Spleen (tissue), 13 donors: ENCODE measurements at regions of chr3 and their contacts with region 1.

Region 1: DNA sequence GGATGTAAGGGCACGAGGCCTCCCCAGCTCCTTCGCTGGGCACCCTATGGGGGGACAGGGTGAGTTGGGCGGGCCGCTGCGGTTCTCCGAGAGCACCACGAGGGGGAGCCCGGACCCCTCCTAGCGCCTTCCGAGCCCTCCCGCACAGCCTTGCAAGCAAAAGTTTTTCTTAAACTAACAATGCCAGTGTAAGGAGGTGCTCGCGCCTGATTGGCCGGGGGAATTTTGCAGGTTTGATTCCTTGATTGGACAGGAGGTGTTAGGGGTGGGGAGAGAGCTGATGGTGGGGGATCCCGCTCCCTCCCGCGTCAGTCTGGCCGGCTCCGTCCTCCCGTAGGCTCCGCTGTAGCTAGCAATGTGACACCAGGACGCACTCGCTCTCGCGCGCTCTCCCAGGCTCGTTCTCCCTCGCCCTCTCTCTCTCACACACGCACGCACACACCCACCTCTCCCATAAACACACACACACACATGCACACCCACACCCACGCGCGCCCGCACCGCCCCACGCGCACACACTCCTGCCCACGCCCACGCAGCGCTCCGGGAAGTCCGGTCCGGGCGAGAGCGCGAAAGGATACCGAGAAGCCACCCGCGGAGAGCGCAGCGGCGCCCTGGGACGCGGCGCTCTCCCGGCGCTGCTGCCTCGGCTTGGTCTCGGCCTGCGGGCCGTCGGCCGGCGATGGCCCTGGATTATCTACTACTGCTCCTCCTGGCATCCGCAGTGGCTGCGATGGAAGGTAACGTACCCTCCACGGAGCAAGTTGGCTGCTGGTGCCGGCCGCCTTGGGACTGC is at the start of gene EPHB1:
- DNase-seq: peak; percentile 92
- H3K4me3 ChIP-seq: peak within 1 kb of the TSS; percentile 40 to 71 (median 50)
- H3K27ac ChIP-seq: peak within 1 kb of the TSS in 5 of 8 donors; percentile 38 to 55 (median 43)
- H3K4me1 ChIP-seq: peaks cover 8 to 39% (median 28%) of the 10 kb centered on the region in 6 donors
- H3K27me3 ChIP-seq: peaks cover 0 to 69% (median 27%) of the 10 kb centered on the region in 7 donors
- CTCF ChIP-seq: peak; percentile 55 to 94 (median 87)
- POLR2A ChIP-seq: peak in 1 of 3 donors; percentile 5
- total RNA-seq, gene EPHB1: 2.5 to 14.0 (median 7.4) TPM

Region 2: DNA sequence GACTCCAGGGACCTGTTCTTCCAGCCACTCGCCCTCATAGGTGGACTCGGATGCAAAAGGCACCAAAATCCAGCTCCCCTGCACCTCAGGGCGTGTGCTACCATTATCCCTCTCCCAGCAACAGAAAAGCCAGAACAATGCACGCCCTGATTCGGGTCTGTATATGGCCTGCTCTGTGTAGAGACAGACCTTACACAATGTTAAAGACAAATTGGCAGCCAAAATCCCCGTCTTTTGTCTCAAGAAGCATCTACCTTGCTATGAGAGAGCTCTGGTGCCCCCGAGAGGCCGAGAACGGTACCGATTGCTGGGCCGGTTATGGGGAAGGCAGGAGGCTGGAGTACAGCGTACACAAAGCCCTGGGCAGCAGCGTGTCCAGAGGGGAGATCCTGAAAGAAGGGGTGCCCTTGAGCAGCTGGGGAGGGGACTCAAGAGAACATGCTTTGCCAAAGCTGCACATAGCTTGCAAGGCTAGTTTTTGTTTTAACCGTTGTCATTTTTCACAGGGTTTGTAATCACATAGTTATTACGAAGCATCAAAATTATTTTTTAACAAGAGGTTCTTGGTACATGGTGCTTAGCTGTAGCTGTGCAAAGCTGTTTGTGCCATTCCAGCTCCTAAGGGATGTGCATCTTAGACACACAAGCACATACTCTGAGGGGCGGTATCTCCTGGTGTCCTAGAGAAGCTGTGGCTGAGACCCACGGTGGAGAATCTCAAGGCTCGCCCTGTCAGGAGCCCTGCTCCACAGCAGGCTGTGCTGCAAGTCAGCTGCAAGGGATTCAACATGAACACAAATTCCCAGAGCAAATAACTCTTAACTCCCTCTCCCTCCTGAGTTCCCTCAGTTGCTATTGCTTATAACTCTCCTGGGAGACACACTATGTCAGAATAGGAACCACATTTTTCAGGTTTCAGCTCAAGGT is 708.9 kb after region 1 on chr3:
- intact Hi-C with region 1: loop called (anchors 5 kb)
- DNase-seq: peak; percentile 85
- H3K4me3 ChIP-seq: peak overlapping the region in 2 of 8 donors; percentile 15 to 26
- H3K27ac ChIP-seq: no peak overlapping the region
- H3K4me1 ChIP-seq: peaks cover 0 to 9% (median 4%) of the 10 kb centered on the region in 6 donors
- H3K27me3 ChIP-seq: peaks cover 0 to 13% (median 0%) of the 10 kb centered on the region in 7 donors
- CTCF ChIP-seq: peak in 10 of 11 experiments; percentile 22 to 72 (median 60)
- POLR2A ChIP-seq: no peak

Region 3: DNA sequence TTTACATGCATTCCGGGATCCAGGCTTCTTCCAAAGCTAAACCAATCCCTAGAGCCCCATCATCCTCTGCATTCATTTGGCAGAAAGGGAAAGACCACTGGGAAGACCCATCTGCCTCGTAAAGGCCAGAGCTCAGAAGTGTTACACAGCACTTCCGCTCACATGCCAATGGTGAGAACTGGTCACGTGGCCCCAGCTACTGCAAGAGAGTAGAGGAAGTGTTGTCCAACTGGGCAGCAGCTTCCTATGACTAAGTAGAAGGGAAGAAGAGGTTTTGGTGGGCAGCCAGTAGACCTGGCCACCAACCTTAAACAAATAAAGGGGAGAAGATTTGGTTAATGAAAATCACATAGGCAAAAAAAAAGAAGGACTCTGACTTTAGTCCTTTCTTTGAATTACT is 1096.0 kb after region 1 on chr3:
- intact Hi-C with region 1: loop called (anchors 5 kb)
- DNase-seq: no peak
- H3K4me3 ChIP-seq: no peak overlapping the region
- H3K27ac ChIP-seq: no peak overlapping the region
- H3K4me1 ChIP-seq: no peaks in the 10 kb centered on the region
- H3K27me3 ChIP-seq: no peaks in the 10 kb centered on the region
- CTCF ChIP-seq: no peak
- POLR2A ChIP-seq: no peak